ENCODE measurements at regions of chr19 and their contacts with region 1.

Region 1: GRCh38 chr19:47243776-47244547 is 12.4 kb upstream of the CCDC9 start:
- DNase-seq: peak; percentile 95
- H3K4me3 Mint-ChIP-seq: peak overlapping the region; percentile 97
- H3K27ac Mint-ChIP-seq: peak overlapping the region; percentile 97
- H3K4me1 Mint-ChIP-seq: peaks cover 34% of the 10 kb centered on the region
- H3K27me3 Mint-ChIP-seq: no peaks in the 10 kb centered on the region

Region 2: DNA sequence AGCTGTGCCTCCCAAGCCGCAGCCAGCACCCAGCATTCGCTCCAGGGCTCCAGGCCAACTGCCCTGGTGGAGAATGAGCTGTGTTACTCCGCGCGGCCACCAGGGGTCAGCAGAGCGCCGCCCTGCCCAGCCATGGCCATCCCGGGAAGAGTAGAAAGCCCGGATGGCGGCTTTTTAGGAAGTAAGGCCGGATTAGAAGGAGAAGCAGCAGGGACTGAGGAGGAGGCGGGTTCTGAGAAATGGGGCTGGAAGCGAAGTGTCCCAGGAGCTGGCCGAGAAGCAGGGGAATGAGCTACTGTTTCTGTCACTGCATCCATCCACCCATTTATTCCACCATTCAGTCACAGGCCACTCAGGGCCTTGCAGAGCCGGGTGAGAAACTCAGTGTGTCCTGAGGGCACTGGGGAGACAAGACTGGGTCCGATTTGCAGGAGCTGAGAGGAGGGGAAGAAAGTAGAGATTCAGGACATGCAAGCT is 230.9 kb before region 1 on chr19:
- CTCF ChIA-PET with region 1: interaction called, 30 read pairs
- intact Hi-C with region 1: loop called (anchors 1 kb)
- DNase-seq: peak; percentile 75
- H3K4me3 Mint-ChIP-seq: no peak overlapping the region
- H3K27ac Mint-ChIP-seq: no peak overlapping the region
- H3K4me1 Mint-ChIP-seq: peaks cover 9% of the 10 kb centered on the region
- H3K27me3 Mint-ChIP-seq: peaks cover 5% of the 10 kb centered on the region

Region 3: GRCh38 chr19:47075179-47075810 is 168.7 kb before region 1 on chr19:
- CTCF ChIA-PET with region 1: interaction called, 8 read pairs
- intact Hi-C with region 1: loop called (anchors 1 kb)
- DNase-seq: no peak
- H3K4me3 Mint-ChIP-seq: no peak overlapping the region
- H3K27ac Mint-ChIP-seq: no peak overlapping the region
- H3K4me1 Mint-ChIP-seq: peaks cover 3% of the 10 kb centered on the region
- H3K27me3 Mint-ChIP-seq: no peaks in the 10 kb centered on the region

Region 4: DNA sequence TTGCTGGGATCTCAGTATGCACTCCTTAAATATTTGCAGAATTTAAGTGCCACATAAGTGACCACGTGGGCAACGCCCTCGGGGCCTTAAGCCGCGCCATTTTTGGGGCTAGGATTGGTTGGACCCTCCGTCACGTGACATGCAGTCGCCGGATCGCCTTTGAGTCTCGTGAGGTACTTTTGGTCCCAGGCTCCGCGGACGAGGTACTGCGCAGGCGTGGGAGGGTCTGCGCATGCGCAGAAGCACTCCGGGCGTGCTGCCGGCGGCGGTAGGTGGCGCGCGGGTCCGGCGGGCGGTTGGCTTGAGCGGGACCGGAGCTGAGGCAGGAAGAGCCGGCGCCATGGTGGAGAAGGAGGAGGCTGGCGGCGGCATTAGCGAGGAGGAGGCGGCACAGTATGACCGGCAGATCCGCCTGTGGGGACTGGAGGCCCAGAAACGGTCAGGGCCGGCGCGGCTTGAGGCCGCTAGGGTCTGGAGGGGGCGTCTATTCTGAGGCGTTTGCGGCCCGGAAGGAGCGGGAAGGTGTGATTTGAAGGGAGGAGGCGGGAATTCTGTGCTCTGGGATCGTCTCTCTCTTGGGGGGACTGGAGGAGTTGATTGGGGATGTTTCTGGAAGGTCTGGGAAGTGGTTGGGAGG is 113.3 kb before region 1 on chr19 and contains the start of gene SAE1:
- CTCF ChIA-PET with region 1: interaction called, 30 read pairs
- intact Hi-C with region 1: loop called (anchors 1 kb)
- DNase-seq: peak; percentile 95
- H3K4me3 Mint-ChIP-seq: peak within 1 kb of the TSS; percentile 99
- H3K27ac Mint-ChIP-seq: peak within 1 kb of the TSS; percentile 99
- H3K4me1 Mint-ChIP-seq: peaks cover 41% of the 10 kb centered on the region
- H3K27me3 Mint-ChIP-seq: no peaks in the 10 kb centered on the region
- total RNA-seq, gene SAE1: 160 to 161 TPM

Region 5: GRCh38 chr19:47157431-47158321 is 86.3 kb before region 1 on chr19:
- CTCF ChIA-PET with region 1: interaction called, 66 read pairs
- intact Hi-C with region 1: loop called (anchors 1 kb)
- DNase-seq: peak; percentile 69
- H3K4me3 Mint-ChIP-seq: peak overlapping the region; percentile 57
- H3K27ac Mint-ChIP-seq: peak overlapping the region; percentile 98
- H3K4me1 Mint-ChIP-seq: peaks cover 76% of the 10 kb centered on the region
- H3K27me3 Mint-ChIP-seq: no peaks in the 10 kb centered on the region

Region 6: DNA sequence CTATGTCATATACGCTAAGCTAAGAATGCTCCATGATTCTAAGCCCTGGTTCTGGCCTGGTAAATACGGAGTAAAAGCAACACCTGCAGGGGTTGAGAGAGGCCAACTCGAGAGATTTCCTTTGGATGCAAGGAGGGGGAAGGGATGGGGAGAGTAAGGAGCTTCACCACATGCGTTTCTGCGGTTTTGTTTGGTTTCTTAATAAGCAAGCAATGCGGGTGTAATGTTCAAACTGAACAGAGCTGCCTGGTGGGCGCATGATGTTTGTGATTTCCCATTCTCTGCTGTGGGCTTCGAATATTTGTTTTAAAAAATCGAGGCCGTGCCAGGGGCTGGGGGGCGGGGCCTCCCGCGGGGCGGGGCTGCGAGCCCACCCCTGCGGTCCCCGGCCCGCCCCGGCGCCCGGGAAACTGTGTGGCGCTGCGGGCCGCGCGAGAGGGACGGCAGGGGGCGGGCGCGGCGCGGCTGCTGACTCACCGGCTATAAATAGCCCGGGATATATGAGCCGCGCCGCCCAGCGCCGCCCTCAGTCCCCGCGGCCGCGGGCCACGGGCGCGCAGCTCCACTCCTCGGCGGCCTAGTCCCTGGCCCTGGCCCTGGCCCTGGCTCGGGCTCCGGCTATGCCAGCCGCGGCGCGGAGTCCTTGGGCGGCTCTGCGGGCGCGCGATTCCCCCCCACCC is 18.1 kb before region 1 on chr19:
- CTCF ChIA-PET with region 1: interaction called, 49 read pairs
- intact Hi-C with region 1: loop called (anchors 1 kb)
- DNase-seq: peak; percentile 83
- H3K4me3 Mint-ChIP-seq: peak overlapping the region; percentile 83
- H3K27ac Mint-ChIP-seq: peak overlapping the region; percentile 67
- H3K4me1 Mint-ChIP-seq: peaks cover 10% of the 10 kb centered on the region
- H3K27me3 Mint-ChIP-seq: no peaks in the 10 kb centered on the region

Region 7: GRCh38 chr19:47256688-47257443 is 12.9 kb after region 1 on chr19:
- CTCF ChIA-PET with region 1: interaction called, 20 read pairs
- intact Hi-C with region 1: loop called (anchors 1 kb)
- DNase-seq: peak; percentile 100
- H3K4me3 Mint-ChIP-seq: peak overlapping the region; percentile 88
- H3K27ac Mint-ChIP-seq: peak overlapping the region; percentile 96
- H3K4me1 Mint-ChIP-seq: peaks cover 39% of the 10 kb centered on the region
- H3K27me3 Mint-ChIP-seq: no peaks in the 10 kb centered on the region